Heart left ventricle (tissue), 16 donors: ENCODE measurements at regions of chr11 and their contacts with region 1.

Region 1: GRCh38 chr11:68312117-68312779 is at the start of gene LRP5:
- DNase-seq: peak in 2 of 5 donors; percentile 31 to 46
- ATAC-seq: peak in 2 of 4 donors; percentile 21 to 22
- H3K4me3 ChIP-seq: peak within 1 kb of the TSS; percentile 25 to 94 (median 72)
- H3K27ac ChIP-seq: peak within 1 kb of the TSS; percentile 47 to 93 (median 84)
- H3K4me1 ChIP-seq: peaks cover 0 to 51% (median 37%) of the 10 kb centered on the region in 12 donors
- H3K27me3 ChIP-seq: peaks cover 0 to 3% (median 0%) of the 10 kb centered on the region in 9 donors
- CTCF ChIP-seq: no peak
- POLR2A ChIP-seq: no peak
- total RNA-seq, gene LRP5: 34.5 to 62.5 (median 39.8) TPM

Region 2: DNA sequence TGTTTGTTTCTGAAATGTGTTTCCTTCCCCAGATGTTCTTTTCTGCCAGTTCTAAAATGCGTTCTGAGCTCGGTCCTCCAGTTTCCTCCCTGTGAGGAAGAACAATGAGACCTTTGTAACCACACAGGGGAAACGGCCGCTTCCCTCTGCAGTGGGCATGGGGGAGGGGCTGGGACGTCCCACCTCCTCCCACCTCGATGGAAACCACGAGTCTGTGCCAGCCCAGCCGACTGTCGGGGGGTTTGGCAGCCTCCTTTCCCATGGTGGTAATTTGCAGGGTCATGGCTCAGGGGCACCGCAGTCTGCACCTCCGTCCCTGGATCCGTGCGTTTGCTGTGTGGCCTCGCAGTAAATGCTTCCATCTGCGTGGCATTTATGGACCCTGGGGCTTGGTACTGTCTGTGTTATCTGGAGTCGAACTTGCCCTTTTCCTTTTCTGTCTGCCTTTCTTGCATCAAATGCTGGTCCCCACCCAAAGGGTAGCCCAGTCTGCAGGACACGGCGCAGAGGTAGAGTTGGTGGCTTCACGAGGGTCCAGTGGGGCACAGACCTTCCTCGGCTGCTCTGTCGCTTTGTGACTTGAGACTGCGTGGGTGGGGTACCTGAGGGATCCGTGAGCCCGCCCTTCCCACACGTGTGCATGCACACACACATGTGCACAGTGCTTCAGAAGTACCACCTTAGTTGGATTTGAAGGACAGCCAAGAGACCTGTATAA is 16.3 kb after region 1 on chr11:
- intact Hi-C with region 1: loop called in 2 of 10 experiments (anchors 2 kb)
- DNase-seq: peak in 4 of 5 donors; percentile 61 to 75 (median 68)
- ATAC-seq: peak; percentile 31 to 55 (median 43)
- H3K4me3 ChIP-seq: peak overlapping the region in 1 of 12 donors; percentile 24
- H3K27ac ChIP-seq: peak overlapping the region in 9 of 12 donors; percentile 15 to 69 (median 34)
- H3K4me1 ChIP-seq: peaks cover 16 to 94% (median 85%) of the 10 kb centered on the region in 12 donors
- H3K27me3 ChIP-seq: no peaks in the 10 kb centered on the region
- CTCF ChIP-seq: no peak
- POLR2A ChIP-seq: no peak

Region 3: GRCh38 chr11:68370211-68371111 is 58.2 kb after region 1 on chr11:
- intact Hi-C with region 1: loop called in 3 of 10 experiments (anchors 2 to 5 kb)
- DNase-seq: peak in 3 of 5 donors; percentile 46 to 75 (median 69)
- ATAC-seq: peak; percentile 35 to 71 (median 48)
- H3K4me3 ChIP-seq: no peak overlapping the region
- H3K27ac ChIP-seq: peak overlapping the region; percentile 61 to 92 (median 84)
- H3K4me1 ChIP-seq: peaks cover 21 to 61% (median 55%) of the 10 kb centered on the region in 12 donors
- H3K27me3 ChIP-seq: no peaks in the 10 kb centered on the region
- CTCF ChIP-seq: no peak
- POLR2A ChIP-seq: peak in 1 of 2 donors; percentile 17

Region 4: DNA sequence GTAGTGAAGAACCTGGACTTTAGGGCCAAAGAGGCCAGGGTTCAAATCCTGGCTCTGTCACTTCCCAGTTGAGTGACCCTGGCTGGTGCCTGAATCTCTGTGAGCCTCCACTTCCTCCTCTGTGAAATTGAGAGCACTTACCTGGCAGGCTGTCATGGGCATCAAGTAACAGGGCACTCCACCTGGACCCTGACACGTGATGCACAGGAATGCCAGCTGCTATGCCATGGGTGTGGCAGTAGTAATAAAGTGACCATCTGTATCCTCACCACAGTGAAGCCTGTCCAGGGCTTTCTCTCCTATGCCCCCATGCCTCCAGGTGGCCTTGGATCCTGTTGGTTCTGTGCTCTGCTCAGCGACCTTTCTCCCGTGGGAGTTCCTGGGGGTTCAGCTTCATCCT is 118.6 kb after region 1 on chr11:
- intact Hi-C with region 1: no loop called
- DNase-seq: no peak
- ATAC-seq: no peak
- H3K4me3 ChIP-seq: no peak overlapping the region
- H3K27ac ChIP-seq: no peak overlapping the region
- H3K4me1 ChIP-seq: peaks cover 0 to 23% (median 12%) of the 10 kb centered on the region in 12 donors
- H3K27me3 ChIP-seq: no peaks in the 10 kb centered on the region
- CTCF ChIP-seq: no peak
- POLR2A ChIP-seq: no peak